Mammary epithelial cell (primary cell): ENCODE measurements at regions of chr5 and their contacts with region 1.

Region 1: GRCh38 chr5:148730943-148731861 is 76.9 kb upstream of the HTR4 start:
- DNase-seq: peak; percentile 64
- H3K4me3 ChIP-seq: peak overlapping the region in 1 of 3 experiments; percentile 4
- H3K27ac ChIP-seq: no peak overlapping the region
- H3K4me1 ChIP-seq: peaks cover 6% of the 10 kb centered on the region
- H3K27me3 ChIP-seq: no peaks in the 10 kb centered on the region
- CTCF ChIP-seq: peak; percentile 76 to 98

Region 2: GRCh38 chr5:148760945-148761638 is 29.9 kb after region 1 on chr5:
- CTCF ChIA-PET with region 1: no interaction called
- dilution Hi-C with region 1: no loop called
- in situ Hi-C with region 1: no loop called
- intact Hi-C with region 1: no loop called
- DNase-seq: peak; percentile 48
- H3K4me3 ChIP-seq: no peak overlapping the region
- H3K27ac ChIP-seq: no peak overlapping the region
- H3K4me1 ChIP-seq: no peaks in the 10 kb centered on the region
- H3K27me3 ChIP-seq: no peaks in the 10 kb centered on the region
- CTCF ChIP-seq: no peak

Region 3: GRCh38 chr5:149035372-149035790 is 304.2 kb after region 1 on chr5:
- CTCF ChIA-PET with region 1: interaction called, 3 read pairs
- dilution Hi-C with region 1: no loop called
- in situ Hi-C with region 1: loop called (anchors 10 kb)
- intact Hi-C with region 1: loop called (anchors 1 kb)
- DNase-seq: peak; percentile 61
- H3K4me3 ChIP-seq: no peak overlapping the region
- H3K27ac ChIP-seq: no peak overlapping the region
- H3K4me1 ChIP-seq: peaks cover 25% of the 10 kb centered on the region
- H3K27me3 ChIP-seq: no peaks in the 10 kb centered on the region
- CTCF ChIP-seq: peak; percentile 88 to 90

Region 4: GRCh38 chr5:149228618-149229297 is 497.6 kb after region 1 on chr5:
- CTCF ChIA-PET with region 1: no interaction called
- dilution Hi-C with region 1: no loop called
- in situ Hi-C with region 1: no loop called
- intact Hi-C with region 1: loop called (anchors 1 kb)
- DNase-seq: peak; percentile 76
- H3K4me3 ChIP-seq: no peak overlapping the region
- H3K27ac ChIP-seq: no peak overlapping the region
- H3K4me1 ChIP-seq: peaks cover 21% of the 10 kb centered on the region
- H3K27me3 ChIP-seq: no peaks in the 10 kb centered on the region
- CTCF ChIP-seq: peak; percentile 73 to 85